Activated CD4-positive, alpha-beta T cell treated with anti-CD3 and anti-CD28 coated beads, Interleukin-2, amount 10 ng/mL, durations not matched to agents 24 days and 14 days (primary cell): ENCODE measurements at regions of chr10 and their contacts with region 1.

Region 1: DNA sequence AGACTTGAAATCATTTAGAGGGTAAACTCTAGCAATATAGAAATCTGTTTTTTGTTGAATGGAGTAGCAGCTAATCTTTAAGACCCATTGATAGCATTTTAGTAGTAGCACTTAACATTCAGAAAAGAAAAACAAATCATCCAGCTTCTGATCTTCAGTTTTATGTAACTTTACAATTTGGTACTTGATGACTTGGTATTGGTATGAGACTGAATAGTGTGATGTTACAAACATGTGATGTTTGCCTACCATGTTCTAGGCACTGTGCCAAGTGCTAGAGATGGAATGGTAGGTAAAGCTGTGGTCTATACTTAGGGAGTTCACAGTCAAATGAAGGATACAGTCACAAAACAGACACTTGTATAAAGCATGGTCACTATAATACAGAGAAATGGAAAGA is 21.3 kb downstream of the ZEB1 start:
- DNase-seq: no peak
- H3K4me3 Mint-ChIP-seq: no peak overlapping the region
- H3K27ac Mint-ChIP-seq: no peak overlapping the region
- H3K4me1 Mint-ChIP-seq: peaks cover 12% of the 10 kb centered on the region
- H3K27me3 Mint-ChIP-seq: no peaks in the 10 kb centered on the region

Region 2: GRCh38 chr10:31083765-31084184 is 256.6 kb before region 1 on chr10:
- intact Hi-C with region 1: loop called (anchors 2 kb)
- DNase-seq: peak; percentile 91
- H3K4me3 Mint-ChIP-seq: no peak overlapping the region
- H3K27ac Mint-ChIP-seq: peak overlapping the region; percentile 66
- H3K4me1 Mint-ChIP-seq: peaks cover 11% of the 10 kb centered on the region
- H3K27me3 Mint-ChIP-seq: no peaks in the 10 kb centered on the region

Region 3: GRCh38 chr10:31101123-31101522 is 239.2 kb before region 1 on chr10:
- intact Hi-C with region 1: loop called (anchors 1 kb)
- DNase-seq: peak; percentile 89
- H3K4me3 Mint-ChIP-seq: peak overlapping the region; percentile 76
- H3K27ac Mint-ChIP-seq: peak overlapping the region; percentile 93
- H3K4me1 Mint-ChIP-seq: peaks cover 60% of the 10 kb centered on the region
- H3K27me3 Mint-ChIP-seq: no peaks in the 10 kb centered on the region

Region 4: DNA sequence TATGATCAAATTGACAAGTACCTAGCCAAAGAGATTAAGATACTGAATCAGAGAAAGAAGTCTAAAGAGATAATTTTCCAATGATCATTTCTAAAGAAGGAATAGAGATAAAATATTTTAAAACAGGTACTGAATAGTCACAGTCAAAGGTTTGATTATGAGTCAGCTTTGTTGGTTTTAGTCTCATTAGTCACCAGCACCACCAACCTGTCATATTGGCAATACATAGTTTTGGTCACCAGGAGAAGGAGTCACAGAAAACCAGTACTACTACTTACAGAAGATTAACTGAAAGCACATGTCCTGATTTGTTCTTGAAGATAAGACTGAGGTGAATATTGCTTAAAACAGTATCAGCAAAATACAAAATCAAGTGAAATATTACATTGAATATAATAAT is 13.2 kb after region 1 on chr10:
- intact Hi-C with region 1: loop called (anchors 1 kb)
- DNase-seq: peak; percentile 67
- H3K4me3 Mint-ChIP-seq: peak overlapping the region; percentile 25
- H3K27ac Mint-ChIP-seq: peak overlapping the region; percentile 80
- H3K4me1 Mint-ChIP-seq: peaks cover 39% of the 10 kb centered on the region
- H3K27me3 Mint-ChIP-seq: no peaks in the 10 kb centered on the region

Region 5: DNA sequence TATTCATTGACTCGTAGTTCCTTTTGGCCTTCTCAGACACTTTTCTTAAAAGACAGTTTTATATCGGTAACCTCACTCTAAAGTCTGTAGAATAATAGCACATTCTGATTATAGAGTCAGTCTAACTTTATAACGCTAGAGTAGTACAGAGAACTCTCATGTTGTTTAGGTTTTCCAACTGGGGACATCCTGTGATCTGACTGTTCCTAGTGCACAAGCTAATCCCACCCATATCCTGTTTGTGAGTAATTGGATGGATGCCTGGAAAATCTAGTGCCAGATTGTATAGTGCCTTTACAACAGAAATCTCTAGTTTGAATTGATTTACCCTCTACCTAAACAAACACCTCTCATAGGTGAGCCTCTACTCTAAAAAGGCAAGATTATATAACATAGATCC is 86.1 kb after region 1 on chr10:
- intact Hi-C with region 1: loop called (anchors 5 kb)
- DNase-seq: no peak
- H3K4me3 Mint-ChIP-seq: no peak overlapping the region
- H3K27ac Mint-ChIP-seq: no peak overlapping the region
- H3K4me1 Mint-ChIP-seq: peaks cover 17% of the 10 kb centered on the region
- H3K27me3 Mint-ChIP-seq: no peaks in the 10 kb centered on the region

Region 6: DNA sequence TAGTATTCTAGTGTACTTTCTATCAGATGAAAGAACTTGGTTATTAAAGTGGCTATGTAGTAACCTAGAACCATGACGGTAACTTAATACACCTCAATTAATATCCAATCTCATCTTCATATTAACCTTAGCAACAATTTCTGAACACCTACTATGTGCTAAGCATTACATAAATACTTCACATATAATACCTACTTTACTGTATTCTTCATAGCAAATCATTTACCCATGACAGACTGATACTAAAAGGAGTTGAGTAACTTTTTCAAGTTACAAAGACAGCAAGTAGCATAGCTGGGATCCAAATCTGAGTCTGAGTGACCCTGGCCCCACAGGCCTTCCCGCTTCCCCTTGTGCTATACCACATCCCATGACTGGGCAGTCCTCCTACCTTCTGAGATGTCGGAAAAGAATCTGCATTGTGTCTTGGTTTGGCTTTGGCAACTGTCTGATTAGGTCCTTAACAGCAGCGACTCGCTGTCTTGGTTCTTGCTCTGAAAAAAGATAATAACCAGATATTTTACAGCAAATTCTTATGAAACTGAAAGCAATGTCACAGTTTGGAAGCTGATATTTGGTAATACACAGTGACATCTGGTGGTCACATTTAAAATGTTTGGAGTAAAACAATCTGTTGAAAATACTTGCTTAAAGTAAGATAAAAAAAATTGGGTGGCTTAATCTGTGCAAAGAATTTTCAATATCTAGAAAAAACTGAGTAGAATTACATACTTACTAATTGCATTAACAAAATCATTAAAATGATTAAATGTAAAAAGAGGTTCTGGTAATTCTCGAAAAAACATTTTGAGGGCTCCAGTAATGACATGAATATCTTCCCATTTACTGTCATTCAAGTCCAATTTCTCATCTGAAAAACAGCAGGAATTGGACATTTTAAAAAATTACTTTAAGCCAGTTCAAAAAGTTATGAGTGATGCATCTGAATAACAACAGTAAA is 468.2 kb after region 1 on chr10:
- intact Hi-C with region 1: loop called (anchors 10 kb)
- DNase-seq: peak; percentile 71
- H3K4me3 Mint-ChIP-seq: peak overlapping the region; percentile 72
- H3K27ac Mint-ChIP-seq: peak overlapping the region; percentile 81
- H3K4me1 Mint-ChIP-seq: peaks cover 6% of the 10 kb centered on the region
- H3K27me3 Mint-ChIP-seq: no peaks in the 10 kb centered on the region

Region 7: GRCh38 chr10:32055813-32056600 is 715.7 kb after region 1 on chr10 and contains the start of gene KIF5B:
- intact Hi-C with region 1: loop called (anchors 10 kb)
- DNase-seq: peak; percentile 97
- H3K4me3 Mint-ChIP-seq: peak within 1 kb of the TSS; percentile 92
- H3K27ac Mint-ChIP-seq: peak within 1 kb of the TSS; percentile 96
- H3K4me1 Mint-ChIP-seq: peaks cover 36% of the 10 kb centered on the region
- H3K27me3 Mint-ChIP-seq: no peaks in the 10 kb centered on the region
- total RNA-seq, gene KIF5B: 81.3 and 82.2 TPM in 2 replicates